ENCODE measurements at regions of chr3 and their contacts with region 1.

Region 1: DNA sequence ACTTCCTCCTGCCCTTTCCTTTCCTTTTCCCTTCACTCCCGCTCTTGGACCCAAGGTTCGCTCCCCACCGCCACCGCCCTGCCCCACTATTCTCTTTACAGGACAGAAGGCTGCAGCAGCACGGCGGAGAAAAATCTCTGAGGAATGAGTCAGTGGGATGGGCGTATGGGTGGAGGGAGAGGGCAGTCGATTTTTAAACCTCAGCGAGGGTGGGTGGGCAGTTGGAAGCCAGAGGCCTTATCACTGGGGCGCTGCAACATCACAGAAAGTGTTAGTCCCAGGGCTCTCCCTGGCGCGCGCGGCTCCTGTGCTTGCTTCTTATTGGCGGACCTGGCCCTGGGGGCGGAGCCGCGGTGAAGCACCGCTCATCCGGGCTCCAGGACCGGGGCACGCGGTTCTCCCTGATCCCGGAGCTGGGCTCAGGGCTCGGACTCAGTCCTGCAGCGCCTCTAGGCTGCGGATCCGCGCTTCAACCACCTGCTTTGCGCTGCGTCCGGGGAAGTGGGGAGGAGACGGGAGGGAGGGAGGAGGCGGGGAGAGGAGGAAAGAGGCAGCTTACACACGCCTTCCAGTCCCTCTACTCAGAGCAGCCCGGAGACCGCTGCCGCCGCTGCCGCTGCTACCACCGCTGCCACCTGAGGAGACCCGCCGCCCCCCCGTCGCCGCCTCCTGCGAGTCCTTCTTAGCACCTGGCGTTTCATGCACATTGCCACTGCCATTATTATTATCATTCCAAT is at the start of gene ALCAM:
- DNase-seq: peak; percentile 99
- H3K4me3 ChIP-seq: peak within 1 kb of the TSS; percentile 49 to 83 (median 80)
- H3K27ac ChIP-seq: peak within 1 kb of the TSS; percentile 96
- H3K4me1 ChIP-seq: peaks cover 46% of the 10 kb centered on the region
- H3K27me3 ChIP-seq: no peaks in the 10 kb centered on the region
- CTCF ChIP-seq: peak; percentile 75 to 78
- POLR2A ChIP-seq: no peak
- total RNA-seq, gene ALCAM: 118 and 138 TPM in 2 replicates

Region 2: GRCh38 chr3:103991461-103992115 is 1374.9 kb before region 1 on chr3:
- CTCF ChIA-PET with region 1: interaction called, 5 read pairs
- POLR2A ChIA-PET with region 1: no interaction called
- dilution Hi-C with region 1: no loop called
- intact Hi-C with region 1: loop called (anchors 5 kb)
- DNase-seq: peak; percentile 17
- H3K4me3 ChIP-seq: no peak overlapping the region
- H3K27ac ChIP-seq: no peak overlapping the region
- H3K4me1 ChIP-seq: no peaks in the 10 kb centered on the region
- H3K27me3 ChIP-seq: no peaks in the 10 kb centered on the region
- CTCF ChIP-seq: peak; percentile 47
- POLR2A ChIP-seq: no peak

Region 3: GRCh38 chr3:104596551-104596950 is 769.9 kb before region 1 on chr3:
- CTCF ChIA-PET with region 1: interaction called, 78 read pairs
- POLR2A ChIA-PET with region 1: no interaction called
- dilution Hi-C with region 1: no loop called
- intact Hi-C with region 1: loop called (anchors 1 kb)
- DNase-seq: peak; percentile 68
- H3K4me3 ChIP-seq: no peak overlapping the region
- H3K27ac ChIP-seq: no peak overlapping the region
- H3K4me1 ChIP-seq: no peaks in the 10 kb centered on the region
- H3K27me3 ChIP-seq: no peaks in the 10 kb centered on the region
- CTCF ChIP-seq: peak; percentile 42 to 49
- POLR2A ChIP-seq: no peak

Region 4: DNA sequence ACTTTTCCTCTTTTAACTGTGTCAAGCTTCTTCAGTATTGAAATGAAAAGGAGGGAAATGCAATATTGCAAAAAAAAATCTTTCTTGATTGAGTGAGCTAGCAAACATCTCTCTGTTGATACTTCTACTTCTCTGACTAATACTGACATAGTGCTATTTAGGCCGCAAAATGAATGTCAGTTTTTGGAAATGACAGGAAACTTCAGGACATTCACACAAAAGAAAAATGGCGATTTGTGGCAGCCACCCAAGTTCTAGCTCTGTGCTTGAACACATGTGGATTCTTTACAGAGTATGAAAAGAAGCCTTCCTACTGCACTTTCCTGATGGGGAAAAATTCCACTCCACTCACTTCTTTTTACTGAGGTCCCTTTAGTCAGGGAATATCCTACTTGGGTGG is 486.6 kb before region 1 on chr3:
- CTCF ChIA-PET with region 1: no interaction called
- POLR2A ChIA-PET with region 1: no interaction called
- dilution Hi-C with region 1: no loop called
- intact Hi-C with region 1: loop called (anchors 1 kb)
- DNase-seq: peak; percentile 87
- H3K4me3 ChIP-seq: no peak overlapping the region
- H3K27ac ChIP-seq: peak overlapping the region; percentile 25
- H3K4me1 ChIP-seq: peaks cover 9% of the 10 kb centered on the region
- H3K27me3 ChIP-seq: no peaks in the 10 kb centered on the region
- CTCF ChIP-seq: no peak
- POLR2A ChIP-seq: no peak

Region 5: GRCh38 chr3:105195260-105195659 is 171.2 kb before region 1 on chr3:
- CTCF ChIA-PET with region 1: interaction called, 14 read pairs
- POLR2A ChIA-PET with region 1: interaction called, 3 read pairs
- dilution Hi-C with region 1: no loop called
- intact Hi-C with region 1: loop called (anchors 1 kb)
- DNase-seq: peak; percentile 85
- H3K4me3 ChIP-seq: peak overlapping the region in 1 of 3 experiments; percentile 27
- H3K27ac ChIP-seq: peak overlapping the region; percentile 55
- H3K4me1 ChIP-seq: peaks cover 17% of the 10 kb centered on the region
- H3K27me3 ChIP-seq: no peaks in the 10 kb centered on the region
- CTCF ChIP-seq: no peak
- POLR2A ChIP-seq: no peak

Region 6: GRCh38 chr3:105518806-105519418 is 152.4 kb after region 1 on chr3:
- CTCF ChIA-PET with region 1: interaction called, 16 read pairs
- POLR2A ChIA-PET with region 1: no interaction called
- dilution Hi-C with region 1: no loop called
- intact Hi-C with region 1: loop called (anchors 1 kb)
- DNase-seq: peak; percentile 78
- H3K4me3 ChIP-seq: no peak overlapping the region
- H3K27ac ChIP-seq: no peak overlapping the region
- H3K4me1 ChIP-seq: no peaks in the 10 kb centered on the region
- H3K27me3 ChIP-seq: no peaks in the 10 kb centered on the region
- CTCF ChIP-seq: peak; percentile 32 to 43
- POLR2A ChIP-seq: no peak

Region 7: DNA sequence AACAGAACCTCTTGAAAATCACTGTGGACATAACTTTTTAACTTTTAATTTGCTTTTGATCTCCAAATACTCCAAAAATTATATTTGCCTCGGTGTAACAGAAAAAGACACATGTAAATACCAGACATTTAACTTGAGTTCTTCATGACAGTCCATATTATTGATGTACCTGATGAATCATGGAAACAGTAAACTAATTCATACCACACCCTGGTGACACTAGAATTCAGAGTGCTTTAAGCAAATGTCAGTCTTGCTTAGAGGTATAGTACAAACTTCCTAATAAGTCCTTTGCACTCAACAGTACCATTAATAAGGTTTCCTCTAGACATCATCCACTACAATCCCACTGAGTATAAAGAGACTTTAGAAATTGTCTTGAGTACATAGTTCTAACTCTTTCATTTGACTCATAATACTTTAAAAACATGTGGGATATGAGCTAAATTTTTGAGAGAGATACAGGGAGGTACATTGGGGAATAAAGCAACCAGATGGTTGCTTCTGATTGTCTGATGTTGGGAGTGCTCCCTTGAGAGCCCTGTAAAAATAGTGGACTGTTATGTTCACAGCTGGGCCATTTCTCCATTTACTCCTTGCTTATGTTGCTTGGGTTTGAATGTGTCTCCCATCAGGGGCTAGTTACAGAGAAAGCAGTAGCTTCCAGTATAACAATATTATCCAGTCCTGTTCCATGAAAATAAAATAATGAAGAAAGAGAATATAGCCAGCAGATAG is 176.0 kb after region 1 on chr3:
- CTCF ChIA-PET with region 1: no interaction called
- POLR2A ChIA-PET with region 1: no interaction called
- dilution Hi-C with region 1: no loop called
- intact Hi-C with region 1: no loop called
- DNase-seq: no peak
- H3K4me3 ChIP-seq: no peak overlapping the region
- H3K27ac ChIP-seq: no peak overlapping the region
- H3K4me1 ChIP-seq: peaks cover 3% of the 10 kb centered on the region
- H3K27me3 ChIP-seq: no peaks in the 10 kb centered on the region
- CTCF ChIP-seq: no peak
- POLR2A ChIP-seq: no peak

Region 8: GRCh38 chr3:107117922-107118536 is 1751.5 kb after region 1 on chr3:
- CTCF ChIA-PET with region 1: interaction called, 3 read pairs
- POLR2A ChIA-PET with region 1: no interaction called
- dilution Hi-C with region 1: no loop called
- intact Hi-C with region 1: loop called (anchors 1 kb)
- DNase-seq: peak; percentile 60
- H3K4me3 ChIP-seq: no peak overlapping the region
- H3K27ac ChIP-seq: no peak overlapping the region
- H3K4me1 ChIP-seq: no peaks in the 10 kb centered on the region
- H3K27me3 ChIP-seq: peaks cover 0 to 8% of the 10 kb centered on the region in 2 experiments
- CTCF ChIP-seq: peak; percentile 43 to 52
- POLR2A ChIP-seq: no peak

Measured in endothelial cell of umbilical vein (primary cell).